CD8-positive, alpha-beta T cell (primary cell): ENCODE measurements at regions of chr3 and their contacts with region 1.

Region 1: GRCh38 chr3:185353823-185354614 is 8.9 kb upstream of the MAP3K13 start:
- DNase-seq: peak; percentile 25 to 76 (median 59)
- ATAC-seq: peak; percentile 97
- H3K4me3 ChIP-seq: no peak overlapping the region
- H3K4me3 Mint-ChIP-seq: no peak overlapping the region
- H3K27ac ChIP-seq: no peak overlapping the region
- H3K27ac Mint-ChIP-seq: no peak overlapping the region
- H3K4me1 ChIP-seq: no peaks in the 10 kb centered on the region
- H3K4me1 Mint-ChIP-seq: no peaks in the 10 kb centered on the region
- H3K27me3 ChIP-seq: no peaks in the 10 kb centered on the region
- H3K27me3 Mint-ChIP-seq: peaks cover 23% of the 10 kb centered on the region
- CTCF ChIP-seq: peak; percentile 51

Region 2: GRCh38 chr3:185371306-185372074 is 17.5 kb after region 1 on chr3:
- CTCF ChIA-PET with region 1: no interaction called
- POLR2A ChIA-PET with region 1: no interaction called
- intact Hi-C with region 1: no loop called
- DNase-seq: no peak
- ATAC-seq: no peak
- H3K4me3 ChIP-seq: no peak overlapping the region
- H3K4me3 Mint-ChIP-seq: no peak overlapping the region
- H3K27ac ChIP-seq: no peak overlapping the region
- H3K27ac Mint-ChIP-seq: no peak overlapping the region
- H3K4me1 ChIP-seq: no peaks in the 10 kb centered on the region
- H3K4me1 Mint-ChIP-seq: no peaks in the 10 kb centered on the region
- H3K27me3 ChIP-seq: peaks cover 0 to 3% of the 10 kb centered on the region in 2 experiments
- H3K27me3 Mint-ChIP-seq: peaks cover 16% of the 10 kb centered on the region
- CTCF ChIP-seq: no peak

Region 3: DNA sequence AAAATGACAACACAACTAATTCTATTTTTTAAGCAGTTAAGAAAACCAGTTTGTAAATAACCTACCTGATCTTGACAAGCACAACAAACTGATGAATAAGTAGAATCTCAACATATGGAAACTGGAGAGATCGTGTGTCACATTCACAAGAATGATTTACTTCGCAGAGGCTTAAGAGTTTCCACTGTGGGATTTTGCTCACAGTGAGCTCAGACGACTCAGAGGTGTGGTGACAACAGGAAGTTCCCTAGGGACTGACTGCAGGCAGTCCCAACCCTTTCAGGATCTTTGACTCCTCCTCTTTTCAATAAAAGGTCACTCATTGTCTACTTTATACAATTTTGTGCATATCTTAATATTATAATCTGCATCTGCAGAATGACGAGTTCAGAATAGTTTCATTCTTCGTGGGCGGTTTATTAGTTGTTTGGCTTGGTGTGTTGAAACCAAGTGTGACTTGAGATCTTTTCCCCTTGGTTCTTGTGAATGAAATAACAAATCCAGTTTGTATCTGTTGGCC is 198.4 kb after region 1 on chr3 and contains the start of gene LIPH:
- CTCF ChIA-PET with region 1: no interaction called
- POLR2A ChIA-PET with region 1: no interaction called
- intact Hi-C with region 1: loop called (anchors 10 kb)
- DNase-seq: peak in 1 of 9 experiments; percentile 25
- ATAC-seq: no peak
- H3K4me3 ChIP-seq: no peak within 1 kb of the TSS
- H3K4me3 Mint-ChIP-seq: no peak within 1 kb of the TSS
- H3K27ac ChIP-seq: no peak within 1 kb of the TSS
- H3K27ac Mint-ChIP-seq: no peak within 1 kb of the TSS
- H3K4me1 ChIP-seq: no peaks in the 10 kb centered on the region
- H3K4me1 Mint-ChIP-seq: no peaks in the 10 kb centered on the region
- H3K27me3 ChIP-seq: no peaks in the 10 kb centered on the region
- H3K27me3 Mint-ChIP-seq: no peaks in the 10 kb centered on the region
- CTCF ChIP-seq: no peak
- total RNA-seq, gene LIPH: not detected